ENCODE measurements at regions of chr12 and their contacts with region 1.

Region 1: GRCh38 chr12:7219599-7220243 is 30.2 kb downstream of the PEX5 start:
- DNase-seq: peak; percentile 19
- ATAC-seq: peak; percentile 86
- H3K4me3 ChIP-seq: no peak overlapping the region
- H3K27ac ChIP-seq: no peak overlapping the region
- H3K4me1 ChIP-seq: no peaks in the 10 kb centered on the region
- H3K27me3 ChIP-seq: no peaks in the 10 kb centered on the region
- CTCF ChIP-seq: peak; percentile 76 to 95 (median 85)
- EP300 ChIP-seq: no peak
- POLR2A ChIP-seq: no peak
- RAD21 ChIP-seq: peak; percentile 95

Region 2: DNA sequence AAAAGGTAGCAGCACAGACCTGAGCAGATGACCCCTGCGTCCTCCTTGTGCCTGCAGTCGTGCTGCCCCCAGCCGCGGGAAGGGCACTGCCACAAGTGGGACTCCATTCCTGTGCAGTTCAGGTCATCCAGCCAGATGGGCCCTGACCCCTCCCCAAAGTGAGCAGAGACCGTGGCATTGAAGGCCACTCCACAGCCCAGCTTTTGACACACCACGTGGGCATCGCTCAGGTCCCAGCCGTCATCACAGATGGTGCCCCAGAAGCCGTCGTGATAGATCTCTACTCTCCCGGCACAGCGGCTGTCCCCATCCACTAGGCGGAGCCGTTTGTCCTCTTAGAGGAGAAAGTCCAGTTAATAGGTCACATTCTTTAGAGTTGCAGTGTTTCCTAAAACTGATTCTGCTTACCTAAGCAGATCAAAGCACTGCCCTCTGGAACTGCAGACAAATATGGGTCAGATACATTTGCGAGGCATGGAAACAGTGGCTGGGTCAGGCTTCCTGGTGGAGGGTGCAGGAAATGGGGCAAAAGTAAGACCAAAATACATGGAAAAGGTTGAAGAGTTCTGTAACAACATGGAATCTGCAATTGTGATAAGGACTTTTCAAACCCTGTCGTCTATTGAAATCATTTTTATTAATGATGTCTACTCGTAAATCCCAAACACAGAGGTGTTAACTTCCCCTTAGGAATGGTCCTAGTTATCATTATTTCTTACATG is 154.9 kb after region 1 on chr12:
- CTCF ChIA-PET with region 1: no interaction called
- POLR2A ChIA-PET with region 1: no interaction called
- RAD21 ChIA-PET with region 1: no interaction called
- SMC1A ChIA-PET with region 1: no interaction called
- in situ Hi-C with region 1: no loop called
- intact Hi-C with region 1: loop called (anchors 5 kb)
- DNase-seq: no peak
- ATAC-seq: peak; percentile 84
- H3K4me3 ChIP-seq: no peak overlapping the region
- H3K27ac ChIP-seq: no peak overlapping the region
- H3K4me1 ChIP-seq: no peaks in the 10 kb centered on the region
- H3K27me3 ChIP-seq: no peaks in the 10 kb centered on the region
- CTCF ChIP-seq: peak; percentile 55 to 70 (median 62)
- EP300 ChIP-seq: no peak
- POLR2A ChIP-seq: no peak
- RAD21 ChIP-seq: peak; percentile 38

Region 3: DNA sequence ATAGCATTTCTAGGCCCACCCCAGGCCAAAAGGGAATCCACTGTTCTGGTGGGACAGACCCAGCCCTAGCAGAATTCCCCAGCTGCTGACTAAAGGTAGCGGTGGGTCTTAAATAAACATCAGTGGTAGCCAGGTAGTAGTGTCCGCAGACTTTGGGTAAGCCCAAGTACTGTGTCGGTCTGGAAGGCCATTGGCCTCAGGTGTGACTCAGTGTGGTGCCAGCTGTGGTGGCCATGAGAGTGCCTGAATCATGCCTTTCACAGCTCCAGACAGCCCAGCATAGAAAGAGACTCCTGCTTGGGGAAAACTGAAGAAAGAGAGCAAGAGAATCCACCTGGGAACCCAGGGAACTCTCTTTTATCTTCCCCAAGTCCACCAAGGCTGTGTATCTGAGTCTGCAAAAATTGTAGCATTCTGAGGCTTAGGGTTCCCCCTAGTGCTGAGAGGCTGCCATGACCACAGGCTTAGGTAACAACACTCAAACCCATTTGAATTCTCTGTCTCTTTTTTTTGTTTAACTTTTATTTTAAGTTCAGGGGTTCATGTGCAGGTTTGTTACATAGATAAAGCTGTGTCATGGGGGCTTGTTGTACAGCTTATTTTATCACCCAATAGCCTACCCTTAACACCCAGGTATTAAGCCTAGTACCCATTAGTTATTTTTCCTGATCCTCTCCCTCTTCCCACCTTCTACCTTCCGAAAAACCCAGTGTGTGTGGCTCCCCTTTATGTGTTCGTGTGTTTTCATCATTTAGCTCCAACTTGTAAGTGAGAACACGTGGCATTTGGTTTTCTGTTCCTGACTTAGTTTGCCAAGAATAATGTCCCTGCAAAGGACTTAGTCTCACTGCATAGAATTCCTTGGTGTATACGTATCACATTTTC is 240.9 kb after region 1 on chr12:
- CTCF ChIA-PET with region 1: interaction called, 23 read pairs
- POLR2A ChIA-PET with region 1: no interaction called
- RAD21 ChIA-PET with region 1: interaction called, 3 read pairs
- SMC1A ChIA-PET with region 1: interaction called, 5 read pairs
- in situ Hi-C with region 1: loop called (anchors 5 kb)
- intact Hi-C with region 1: loop called (anchors 1 kb)
- DNase-seq: no peak
- ATAC-seq: peak; percentile 92
- H3K4me3 ChIP-seq: no peak overlapping the region
- H3K27ac ChIP-seq: no peak overlapping the region
- H3K4me1 ChIP-seq: no peaks in the 10 kb centered on the region
- H3K27me3 ChIP-seq: no peaks in the 10 kb centered on the region
- CTCF ChIP-seq: peak; percentile 81 to 87 (median 84)
- EP300 ChIP-seq: no peak
- POLR2A ChIP-seq: no peak
- RAD21 ChIP-seq: peak; percentile 88